Naive thymus-derived CD4-positive, alpha-beta T cell (primary cell): ENCODE measurements at regions of chr4 and their contacts with region 1.

Region 1: GRCh38 chr4:67581208-67581857 is 22.8 kb downstream of the STAP1 start:
- DNase-seq: peak in 7 of 9 donors; percentile 61 to 77 (median 69)
- ATAC-seq: peak; percentile 95
- H3K4me3 ChIP-seq: peak overlapping the region; percentile 10
- H3K4me3 Mint-ChIP-seq: peak overlapping the region; percentile 34 to 92 (median 76)
- H3K27ac ChIP-seq: peak overlapping the region; percentile 28
- H3K27ac Mint-ChIP-seq: peak overlapping the region; percentile 55 to 93 (median 87)
- H3K4me1 ChIP-seq: peaks cover 8 to 26% of the 10 kb centered on the region in 2 donors
- H3K4me1 Mint-ChIP-seq: peaks cover 22 to 73% (median 56%) of the 10 kb centered on the region in 7 donors
- H3K27me3 ChIP-seq: no peaks in the 10 kb centered on the region
- H3K27me3 Mint-ChIP-seq: no peaks in the 10 kb centered on the region

Region 2: DNA sequence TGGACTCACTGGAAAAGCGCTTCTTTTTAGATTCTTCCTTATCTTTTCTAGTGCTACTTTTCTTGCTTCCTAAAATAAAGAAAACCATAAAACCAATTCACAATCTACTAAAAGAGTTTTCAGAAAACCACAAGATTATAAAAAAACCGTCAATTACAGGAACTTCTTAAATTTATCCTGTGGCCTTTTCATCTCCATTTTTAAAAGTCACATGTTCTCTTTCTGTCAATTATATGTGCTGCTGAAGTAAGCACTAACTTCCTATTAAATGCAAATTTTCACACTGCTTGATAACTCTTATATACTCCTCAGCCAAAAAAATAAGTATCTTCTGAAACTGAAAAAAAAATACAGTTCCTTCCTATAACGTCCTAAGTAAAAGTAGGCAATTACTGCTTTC is 68.8 kb before region 1 on chr4:
- CTCF ChIA-PET with region 1: no interaction called
- POLR2A ChIA-PET with region 1: no interaction called
- intact Hi-C with region 1: no loop called
- DNase-seq: no peak
- ATAC-seq: no peak
- H3K4me3 ChIP-seq: no peak overlapping the region
- H3K4me3 Mint-ChIP-seq: peak overlapping the region in 1 of 10 donors; percentile 33
- H3K27ac ChIP-seq: no peak overlapping the region
- H3K27ac Mint-ChIP-seq: peak overlapping the region in 5 of 9 donors; percentile 15 to 63 (median 40)
- H3K4me1 ChIP-seq: peaks cover 0 to 8% of the 10 kb centered on the region in 2 donors
- H3K4me1 Mint-ChIP-seq: peaks cover 18 to 58% (median 34%) of the 10 kb centered on the region in 7 donors
- H3K27me3 ChIP-seq: no peaks in the 10 kb centered on the region
- H3K27me3 Mint-ChIP-seq: no peaks in the 10 kb centered on the region

Region 3: GRCh38 chr4:67638136-67638535 is 56.8 kb after region 1 on chr4:
- CTCF ChIA-PET with region 1: interaction called, 4 read pairs
- POLR2A ChIA-PET with region 1: no interaction called
- intact Hi-C with region 1: loop called in 1 of 2 experiments (anchors 2 kb)
- DNase-seq: no peak
- ATAC-seq: no peak
- H3K4me3 ChIP-seq: no peak overlapping the region
- H3K4me3 Mint-ChIP-seq: no peak overlapping the region
- H3K27ac ChIP-seq: no peak overlapping the region
- H3K27ac Mint-ChIP-seq: peak overlapping the region in 4 of 9 donors; percentile 43 to 80 (median 54)
- H3K4me1 ChIP-seq: no peaks in the 10 kb centered on the region
- H3K4me1 Mint-ChIP-seq: peaks cover 0 to 29% (median 6%) of the 10 kb centered on the region in 7 donors
- H3K27me3 ChIP-seq: no peaks in the 10 kb centered on the region
- H3K27me3 Mint-ChIP-seq: no peaks in the 10 kb centered on the region

Region 4: DNA sequence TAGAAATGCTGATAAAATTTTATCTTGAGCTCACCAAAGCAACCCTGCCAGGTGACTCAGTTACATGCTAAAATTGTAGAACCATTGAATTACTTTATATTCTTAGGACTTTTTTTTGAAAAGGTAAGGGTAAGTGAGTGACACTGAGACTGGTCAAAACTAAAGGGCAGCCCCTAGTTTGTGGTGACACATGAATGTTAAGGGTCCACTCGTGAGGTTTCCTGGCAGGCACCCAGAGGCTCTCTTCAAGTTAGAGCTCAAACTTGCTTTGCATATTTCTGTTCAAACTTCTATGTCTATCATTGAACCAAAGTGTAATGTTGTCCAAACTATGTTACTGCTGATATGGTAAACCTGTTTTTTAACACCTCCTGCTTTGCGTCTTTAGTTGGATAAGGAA is 272.0 kb after region 1 on chr4:
- CTCF ChIA-PET with region 1: no interaction called
- POLR2A ChIA-PET with region 1: no interaction called
- intact Hi-C with region 1: no loop called
- DNase-seq: no peak
- ATAC-seq: no peak
- H3K4me3 ChIP-seq: no peak overlapping the region
- H3K4me3 Mint-ChIP-seq: no peak overlapping the region
- H3K27ac ChIP-seq: no peak overlapping the region
- H3K27ac Mint-ChIP-seq: no peak overlapping the region
- H3K4me1 ChIP-seq: no peaks in the 10 kb centered on the region
- H3K4me1 Mint-ChIP-seq: no peaks in the 10 kb centered on the region
- H3K27me3 ChIP-seq: no peaks in the 10 kb centered on the region
- H3K27me3 Mint-ChIP-seq: peaks cover 3 to 25% (median 4%) of the 10 kb centered on the region in 5 donors

Region 5: GRCh38 chr4:68129793-68130192 is 548.5 kb after region 1 on chr4 and contains the start of gene TMPRSS11F:
- CTCF ChIA-PET with region 1: no interaction called
- POLR2A ChIA-PET with region 1: no interaction called
- intact Hi-C with region 1: no loop called
- DNase-seq: no peak
- ATAC-seq: no peak
- H3K4me3 ChIP-seq: no peak within 1 kb of the TSS
- H3K4me3 Mint-ChIP-seq: no peak within 1 kb of the TSS
- H3K27ac ChIP-seq: no peak within 1 kb of the TSS
- H3K27ac Mint-ChIP-seq: no peak within 1 kb of the TSS
- H3K4me1 ChIP-seq: no peaks in the 10 kb centered on the region
- H3K4me1 Mint-ChIP-seq: peaks cover 0 to 3% (median 0%) of the 10 kb centered on the region in 7 donors
- H3K27me3 ChIP-seq: no peaks in the 10 kb centered on the region
- H3K27me3 Mint-ChIP-seq: peaks cover 0 to 14% (median 4%) of the 10 kb centered on the region in 5 donors
- total RNA-seq, gene TMPRSS11F: not detected